Right lobe of liver (tissue), 6 donors: ENCODE measurements at regions of chr11 and their contacts with region 1.

Region 1: DNA sequence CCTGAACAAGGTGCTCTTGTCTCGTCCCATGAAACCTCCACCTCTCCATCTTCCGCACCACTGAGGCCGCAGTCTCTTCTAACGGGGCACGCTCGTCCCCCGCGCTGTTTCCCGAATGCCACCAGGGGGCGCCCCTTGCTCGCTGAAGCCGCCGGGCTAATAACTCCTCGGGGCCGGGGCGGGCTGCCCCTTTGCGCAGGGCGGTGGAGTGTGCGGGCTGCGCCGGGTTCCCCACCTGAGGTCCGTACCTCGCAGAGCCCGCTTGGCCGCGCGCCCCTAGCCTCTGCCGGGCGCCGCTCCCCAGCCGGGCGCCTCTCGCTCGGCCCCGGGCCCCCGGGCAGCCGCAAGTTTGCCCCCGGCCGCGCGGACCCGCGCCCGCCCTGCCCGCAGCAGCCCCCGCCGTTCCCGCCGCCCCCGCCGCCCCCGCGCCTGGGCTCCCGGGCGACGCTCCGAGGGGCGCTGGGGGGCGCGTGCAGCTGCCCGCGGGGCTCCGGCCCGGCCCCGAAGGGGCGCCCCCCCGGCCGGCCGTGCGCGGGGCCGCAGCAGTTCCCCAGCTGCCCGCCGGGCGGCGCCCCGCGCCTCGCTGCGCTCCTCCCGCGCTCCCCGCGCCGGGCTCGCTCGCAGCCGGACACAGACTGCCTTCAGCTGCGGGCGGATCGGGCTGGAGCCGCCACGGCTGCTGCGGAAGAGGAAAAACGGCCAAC is at the start of gene GRIK4:
- DNase-seq: peak; percentile 85 to 87 (median 87)
- ATAC-seq: peak; percentile 90 to 96 (median 93)
- H3K4me3 ChIP-seq: peak within 1 kb of the TSS in 1 of 3 donors; percentile 54
- H3K27ac ChIP-seq: no peak within 1 kb of the TSS
- H3K4me1 ChIP-seq: no peaks in the 10 kb centered on the region
- H3K27me3 ChIP-seq: no peaks in the 10 kb centered on the region
- CTCF ChIP-seq: peak; percentile 91 to 93 (median 92)
- POLR2A ChIP-seq: no peak
- total RNA-seq, gene GRIK4: 0.07 to 0.11 TPM in 2 of 6 experiments, not detected in the others

Region 2: GRCh38 chr11:120335908-120336640 is 175.2 kb before region 1 on chr11 and contains the start of gene ARHGEF12:
- intact Hi-C with region 1: no loop called
- DNase-seq: peak; percentile 96 to 97 (median 96)
- ATAC-seq: peak; percentile 58 to 80 (median 77)
- H3K4me3 ChIP-seq: peak within 1 kb of the TSS; percentile 77 to 87 (median 86)
- H3K27ac ChIP-seq: peak within 1 kb of the TSS; percentile 95 to 99 (median 97)
- H3K4me1 ChIP-seq: peaks cover 0 to 18% (median 0%) of the 10 kb centered on the region in 4 donors
- H3K27me3 ChIP-seq: no peaks in the 10 kb centered on the region
- CTCF ChIP-seq: peak in 3 of 4 donors; percentile 21 to 28 (median 21)
- POLR2A ChIP-seq: peak; percentile 96
- total RNA-seq, gene ARHGEF12: 75.1 to 113 (median 94.0) TPM

Region 3: GRCh38 chr11:120682866-120683265 is 171.6 kb after region 1 on chr11:
- intact Hi-C with region 1: loop called (anchors 5 kb)
- DNase-seq: no peak
- ATAC-seq: no peak
- H3K4me3 ChIP-seq: no peak overlapping the region
- H3K27ac ChIP-seq: no peak overlapping the region
- H3K4me1 ChIP-seq: no peaks in the 10 kb centered on the region
- H3K27me3 ChIP-seq: no peaks in the 10 kb centered on the region
- CTCF ChIP-seq: no peak
- POLR2A ChIP-seq: no peak

Region 4: DNA sequence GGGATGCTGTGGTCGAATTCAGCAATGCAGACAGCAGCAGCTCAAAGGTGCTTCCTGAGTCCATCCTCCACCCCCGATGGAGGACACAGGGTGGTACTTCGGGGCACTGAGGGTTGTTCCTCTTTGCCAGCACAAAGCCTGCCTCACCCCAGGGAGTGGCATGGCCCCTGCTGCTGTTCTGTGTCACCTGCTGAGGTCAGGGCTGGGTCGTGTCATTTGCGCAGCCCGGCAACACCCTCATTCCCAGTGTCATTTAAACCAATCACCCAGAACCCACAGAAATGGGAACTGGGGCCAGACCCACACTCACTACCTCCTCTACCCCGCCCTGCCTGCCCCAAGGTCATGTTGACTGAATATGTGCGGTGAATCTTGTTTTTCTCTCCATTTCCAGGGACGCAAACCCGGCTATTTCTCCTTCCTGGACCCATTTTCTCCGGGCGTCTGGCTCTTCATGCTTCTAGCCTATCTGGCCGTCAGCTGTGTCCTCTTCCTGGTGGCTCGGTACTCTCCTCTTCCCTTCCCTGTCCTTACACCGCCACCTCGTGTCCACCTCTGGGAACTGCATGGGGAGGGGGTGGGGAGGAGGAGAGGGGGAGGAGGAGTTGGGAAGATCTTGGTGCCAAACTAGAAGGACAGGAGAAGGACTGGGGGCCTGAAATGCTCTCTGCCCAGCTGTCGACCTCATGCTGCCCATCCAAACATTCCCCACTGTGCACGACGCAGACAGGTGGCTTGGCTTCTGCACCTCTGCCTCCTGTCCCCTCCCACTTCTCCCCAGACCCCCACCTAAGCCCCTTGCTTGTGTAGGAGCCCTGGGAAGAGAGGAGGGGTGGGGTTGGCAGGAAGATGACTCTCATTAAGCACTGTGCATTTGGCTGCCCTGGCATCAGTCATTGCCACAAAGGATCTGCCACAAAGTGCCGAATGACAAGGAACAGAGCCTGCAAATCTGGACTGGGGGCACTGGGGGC is 441.5 kb after region 1 on chr11:
- intact Hi-C with region 1: loop called in 1 of 2 experiments (anchors 10 kb)
- DNase-seq: peak; percentile 73 to 81 (median 77)
- ATAC-seq: peak; percentile 93 to 95 (median 94)
- H3K4me3 ChIP-seq: no peak overlapping the region
- H3K27ac ChIP-seq: no peak overlapping the region
- H3K4me1 ChIP-seq: peaks cover 0 to 7% (median 0%) of the 10 kb centered on the region in 4 donors
- H3K27me3 ChIP-seq: no peaks in the 10 kb centered on the region
- CTCF ChIP-seq: peak; percentile 65 to 71 (median 67)
- POLR2A ChIP-seq: no peak